Endothelial cell of umbilical vein (primary cell): ENCODE measurements at regions of chr4 and their contacts with region 1.

Region 1: DNA sequence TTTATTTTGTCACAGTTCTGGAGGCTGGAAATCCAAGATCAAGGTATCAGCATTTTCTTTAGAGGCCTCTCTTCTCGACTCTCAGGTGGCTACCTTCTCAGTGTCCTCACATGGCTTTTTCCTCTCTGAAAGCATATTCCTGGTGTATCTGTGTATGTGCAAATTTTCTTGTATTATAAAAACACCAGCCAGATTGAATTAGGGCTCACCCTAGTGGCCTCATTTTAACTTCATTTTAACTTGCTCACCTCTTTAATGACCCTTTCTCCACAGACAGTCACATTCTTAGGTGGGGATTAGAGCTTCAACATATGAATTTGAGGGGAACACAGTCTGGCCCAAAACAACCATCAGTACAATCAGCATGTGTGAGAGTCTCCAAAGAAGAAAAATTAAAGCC is 542.4 kb upstream of the FAM241A start:
- DNase-seq: peak; percentile 38
- H3K4me3 ChIP-seq: no peak overlapping the region
- H3K27ac ChIP-seq: no peak overlapping the region
- H3K4me1 ChIP-seq: no peaks in the 10 kb centered on the region
- H3K27me3 ChIP-seq: no peaks in the 10 kb centered on the region
- CTCF ChIP-seq: peak; percentile 7 to 15
- POLR2A ChIP-seq: no peak

Region 2: GRCh38 chr4:111174331-111174730 is 428.5 kb before region 1 on chr4:
- CTCF ChIA-PET with region 1: no interaction called
- POLR2A ChIA-PET with region 1: no interaction called
- dilution Hi-C with region 1: no loop called
- intact Hi-C with region 1: loop called (anchors 10 kb)
- DNase-seq: no peak
- H3K4me3 ChIP-seq: no peak overlapping the region
- H3K27ac ChIP-seq: no peak overlapping the region
- H3K4me1 ChIP-seq: no peaks in the 10 kb centered on the region
- H3K27me3 ChIP-seq: no peaks in the 10 kb centered on the region
- CTCF ChIP-seq: no peak
- POLR2A ChIP-seq: no peak

Region 3: DNA sequence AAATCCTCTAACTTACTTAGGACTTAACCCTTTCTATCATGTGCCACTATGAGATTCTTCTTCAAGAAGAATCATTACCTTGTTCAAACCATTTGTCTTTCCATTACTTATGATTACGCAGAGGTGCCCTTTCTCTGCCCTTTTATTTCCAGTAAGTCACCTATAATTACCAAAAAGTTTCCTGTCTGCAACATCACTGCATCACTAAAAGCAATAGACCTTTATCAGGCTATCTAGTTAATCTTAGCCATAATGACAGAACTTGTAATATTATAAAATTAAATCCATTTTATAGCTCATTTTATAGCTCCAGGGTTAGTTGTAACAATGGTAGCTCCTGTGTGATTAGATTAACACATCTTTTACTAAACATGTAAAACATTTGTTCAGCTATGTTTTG is 306.4 kb before region 1 on chr4:
- CTCF ChIA-PET with region 1: no interaction called
- POLR2A ChIA-PET with region 1: no interaction called
- dilution Hi-C with region 1: no loop called
- intact Hi-C with region 1: no loop called
- DNase-seq: no peak
- H3K4me3 ChIP-seq: no peak overlapping the region
- H3K27ac ChIP-seq: no peak overlapping the region
- H3K4me1 ChIP-seq: no peaks in the 10 kb centered on the region
- H3K27me3 ChIP-seq: no peaks in the 10 kb centered on the region
- CTCF ChIP-seq: no peak
- POLR2A ChIP-seq: no peak